Calu3 (cell line): ENCODE measurements at regions of chr10 and their contacts with region 1.

Region 1: DNA sequence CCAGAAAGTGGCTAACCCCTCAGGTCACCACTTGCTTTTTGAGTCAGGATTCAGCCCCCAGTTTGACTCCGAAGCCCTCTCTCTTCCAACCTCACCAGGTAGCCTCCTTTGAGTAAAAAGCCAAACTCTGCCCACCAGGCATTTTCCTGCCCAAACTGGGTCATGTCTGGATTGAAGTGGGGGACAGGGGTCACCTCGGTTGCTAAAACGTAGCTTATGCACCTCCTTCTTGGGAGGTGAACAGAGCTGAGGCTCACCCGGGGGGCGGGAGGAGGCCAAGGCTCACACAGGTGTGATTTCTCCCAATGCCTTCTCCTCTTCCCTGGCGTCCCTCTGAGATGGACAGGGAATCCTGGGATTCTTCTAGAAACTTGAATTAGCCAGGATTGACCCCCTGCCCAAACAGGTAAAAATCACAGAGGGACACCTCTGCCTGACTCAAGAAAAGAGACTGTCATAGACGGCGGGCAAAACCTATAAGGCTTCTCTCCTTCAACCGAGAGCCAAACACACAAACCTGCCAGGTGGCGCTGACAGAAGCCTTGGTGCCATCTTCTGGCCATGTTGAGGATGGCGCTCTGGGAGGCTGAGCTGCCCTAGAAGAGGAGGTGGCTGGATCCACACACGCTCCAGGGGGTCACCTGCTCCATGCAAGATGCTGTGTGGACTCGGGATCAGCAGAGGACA is 51.6 kb downstream of the PRLHR start:
- DNase-seq: peak; percentile 64
- H3K4me3 Mint-ChIP-seq: no peak overlapping the region
- H3K27ac Mint-ChIP-seq: no peak overlapping the region
- H3K4me1 Mint-ChIP-seq: no peaks in the 10 kb centered on the region
- H3K27me3 Mint-ChIP-seq: peaks cover 95% of the 10 kb centered on the region
- CTCF ChIP-seq: peak; percentile 45

Region 2: DNA sequence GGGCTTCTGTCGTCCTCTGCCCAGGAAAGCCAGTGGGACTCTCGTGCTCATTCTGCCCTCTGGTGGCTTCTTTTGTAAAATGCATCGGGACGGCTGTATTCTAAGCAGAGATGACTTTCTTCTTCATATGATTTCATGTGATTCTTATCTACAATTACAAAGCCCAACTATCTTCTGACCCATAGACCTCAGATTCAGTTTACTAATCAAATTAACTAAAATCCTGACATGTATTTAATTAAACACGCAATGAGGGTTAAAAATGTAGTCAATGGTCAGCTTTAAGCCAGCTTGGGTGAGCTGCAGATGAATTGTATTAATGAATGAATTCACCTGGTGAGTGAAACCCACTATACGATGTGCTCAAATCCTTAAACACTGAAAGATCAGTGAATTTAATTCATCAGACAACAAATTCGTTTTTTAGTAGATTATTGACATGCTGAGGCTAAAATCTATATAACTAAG is 84.1 kb before region 1 on chr10:
- CTCF ChIA-PET with region 1: no interaction called
- intact Hi-C with region 1: loop called (anchors 1 kb)
- DNase-seq: peak; percentile 61
- H3K4me3 Mint-ChIP-seq: no peak overlapping the region
- H3K27ac Mint-ChIP-seq: no peak overlapping the region
- H3K4me1 Mint-ChIP-seq: no peaks in the 10 kb centered on the region
- H3K27me3 Mint-ChIP-seq: peaks cover 60% of the 10 kb centered on the region
- CTCF ChIP-seq: peak; percentile 47